ENCODE measurements at regions of chr6 and their contacts with region 1.

Region 1: GRCh38 chr6:36809941-36810803 is 29.1 kb downstream of the CPNE5 start:
- DNase-seq: peak; percentile 11
- H3K4me3 ChIP-seq: no peak overlapping the region
- H3K27ac ChIP-seq: no peak overlapping the region
- H3K4me1 ChIP-seq: peaks cover 10% of the 10 kb centered on the region
- H3K27me3 ChIP-seq: no peaks in the 10 kb centered on the region
- CTCF ChIP-seq: peak in 1 of 2 donors; percentile 40

Region 2: DNA sequence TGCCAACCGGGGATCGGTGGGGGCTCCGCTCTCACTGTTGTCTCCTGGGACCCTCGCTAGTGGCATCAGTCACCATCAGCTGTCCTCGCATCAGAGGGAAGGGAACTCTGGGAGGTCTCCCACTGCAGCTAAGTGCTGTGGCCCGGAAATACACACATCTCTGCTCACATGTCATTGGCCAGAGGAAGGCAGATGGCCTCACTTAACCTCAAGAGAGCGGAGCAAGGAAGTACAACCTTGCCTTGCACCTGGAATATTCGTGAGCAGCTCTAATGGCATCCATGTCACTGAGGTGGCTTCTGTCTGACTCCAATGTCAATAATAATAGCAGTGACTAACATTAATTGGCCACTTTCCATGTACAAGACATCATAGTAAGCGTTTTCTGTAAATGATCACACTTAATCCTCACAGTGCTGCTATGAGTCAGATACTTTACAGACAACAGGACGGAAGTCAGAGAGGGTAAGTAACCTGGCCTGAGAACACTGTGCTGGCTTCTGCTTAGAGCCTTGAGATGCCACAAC is 999.1 kb before region 1 on chr6:
- CTCF ChIA-PET with region 1: no interaction called
- dilution Hi-C with region 1: no loop called
- in situ Hi-C with region 1: no loop called
- intact Hi-C with region 1: no loop called
- DNase-seq: peak; percentile 87
- H3K4me3 ChIP-seq: no peak overlapping the region
- H3K27ac ChIP-seq: no peak overlapping the region
- H3K4me1 ChIP-seq: peaks cover 11% of the 10 kb centered on the region
- H3K27me3 ChIP-seq: no peaks in the 10 kb centered on the region
- CTCF ChIP-seq: no peak

Region 3: DNA sequence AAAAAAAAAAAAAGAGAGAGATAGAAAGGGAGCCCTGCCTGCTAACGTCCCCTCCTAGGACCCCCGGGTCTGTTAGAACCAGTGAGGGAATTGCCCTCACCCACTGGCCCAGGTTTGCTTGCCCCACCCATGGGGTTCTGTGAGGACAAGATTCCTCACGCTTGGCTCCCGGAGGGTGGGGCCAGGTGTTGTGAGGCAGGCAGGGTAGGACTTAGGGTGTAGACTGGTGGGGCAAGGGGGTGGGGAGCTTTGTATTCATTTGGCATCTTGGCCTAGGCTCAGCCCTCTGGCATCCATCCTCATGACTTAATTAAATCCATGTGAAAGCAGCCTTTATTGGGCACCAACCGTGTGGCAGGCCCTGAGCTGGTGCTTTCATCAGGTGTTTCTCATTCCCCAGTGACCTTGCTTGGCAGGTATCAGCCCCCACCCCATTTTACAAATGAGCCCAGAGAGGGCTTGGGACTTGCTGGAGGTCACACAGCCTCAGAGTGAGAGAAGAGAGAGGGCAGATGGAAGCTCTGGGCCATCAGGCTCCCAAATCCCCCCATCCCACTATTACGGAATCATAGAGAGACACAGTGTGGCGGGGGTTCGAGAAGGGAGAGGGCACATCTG is 93.6 kb before region 1 on chr6:
- CTCF ChIA-PET with region 1: no interaction called
- dilution Hi-C with region 1: loop called (anchors 5 kb)
- in situ Hi-C with region 1: no loop called
- intact Hi-C with region 1: no loop called
- DNase-seq: no peak
- H3K4me3 ChIP-seq: no peak overlapping the region
- H3K27ac ChIP-seq: no peak overlapping the region
- H3K4me1 ChIP-seq: no peaks in the 10 kb centered on the region
- H3K27me3 ChIP-seq: no peaks in the 10 kb centered on the region
- CTCF ChIP-seq: no peak

Region 4: DNA sequence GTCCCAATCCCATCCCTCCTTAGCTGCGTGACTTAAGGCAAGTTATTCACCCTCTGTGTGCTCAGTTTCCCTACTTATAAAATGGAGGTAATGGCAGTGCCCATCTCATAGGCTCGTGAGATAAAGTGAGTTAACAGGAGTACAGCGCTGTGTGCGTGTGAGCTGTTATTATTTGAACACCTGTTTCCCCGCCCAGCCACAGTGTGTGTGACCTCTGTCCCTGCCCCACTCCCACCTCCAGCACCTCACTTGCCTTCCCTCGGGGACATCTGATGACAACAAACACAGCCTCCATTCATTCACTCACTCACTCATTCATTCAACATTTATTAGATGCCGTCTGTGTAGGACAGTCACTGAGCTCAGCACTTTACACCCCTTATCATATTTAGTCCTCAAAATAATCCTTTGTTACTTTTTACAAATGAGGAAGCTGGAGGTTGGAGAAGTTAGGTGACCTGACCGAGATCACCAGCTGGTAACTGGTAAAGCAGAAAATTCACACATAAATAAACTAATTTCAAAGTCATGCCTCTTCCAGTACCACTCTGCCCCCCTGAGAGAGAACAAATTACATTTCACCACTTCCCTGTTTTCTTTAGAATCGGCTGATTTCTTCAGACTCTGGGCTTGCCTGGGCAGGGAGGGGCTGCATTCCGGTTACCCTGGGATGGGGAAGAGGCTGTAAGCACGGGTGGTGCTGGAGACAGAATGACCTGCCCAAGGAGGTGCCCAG is 29.6 kb before region 1 on chr6:
- CTCF ChIA-PET with region 1: no interaction called
- dilution Hi-C with region 1: loop called (anchors 5 kb)
- in situ Hi-C with region 1: no loop called
- intact Hi-C with region 1: no loop called
- DNase-seq: peak; percentile 11
- H3K4me3 ChIP-seq: no peak overlapping the region
- H3K27ac ChIP-seq: no peak overlapping the region
- H3K4me1 ChIP-seq: peaks cover 10% of the 10 kb centered on the region
- H3K27me3 ChIP-seq: no peaks in the 10 kb centered on the region
- CTCF ChIP-seq: no peak

Region 5: DNA sequence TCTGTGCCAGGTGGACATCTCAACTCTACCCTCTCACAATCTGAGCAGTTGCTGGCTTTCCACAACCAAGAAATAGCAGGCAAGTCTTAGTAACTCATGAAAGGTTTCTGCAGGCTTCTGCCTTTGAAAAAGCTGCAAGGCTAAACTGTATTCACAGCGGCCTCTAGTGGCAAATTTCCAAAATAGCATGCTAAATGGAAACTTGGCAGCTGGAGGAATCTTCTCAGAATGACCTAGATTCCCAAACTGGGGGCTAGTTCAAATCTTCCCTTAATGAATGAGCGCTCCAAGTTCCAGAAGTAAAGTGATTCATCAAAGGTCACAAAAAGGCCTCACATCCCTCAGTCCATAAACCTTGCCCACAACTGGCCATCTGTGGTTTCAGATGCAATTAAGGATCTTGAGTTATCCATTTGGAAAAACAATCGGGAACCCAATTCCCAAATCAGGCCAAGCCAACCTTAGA is 41.0 kb after region 1 on chr6:
- CTCF ChIA-PET with region 1: interaction called, 4 read pairs
- dilution Hi-C with region 1: no loop called
- in situ Hi-C with region 1: no loop called
- intact Hi-C with region 1: loop called (anchors 1 kb)
- DNase-seq: peak; percentile 58
- H3K4me3 ChIP-seq: no peak overlapping the region
- H3K27ac ChIP-seq: no peak overlapping the region
- H3K4me1 ChIP-seq: peaks cover 28% of the 10 kb centered on the region
- H3K27me3 ChIP-seq: no peaks in the 10 kb centered on the region
- CTCF ChIP-seq: peak; percentile 83 to 85

Region 6: GRCh38 chr6:36862164-36862847 is 52.1 kb after region 1 on chr6:
- CTCF ChIA-PET with region 1: no interaction called
- dilution Hi-C with region 1: loop called (anchors 5 kb)
- in situ Hi-C with region 1: no loop called
- intact Hi-C with region 1: no loop called
- DNase-seq: peak; percentile 90
- H3K4me3 ChIP-seq: no peak overlapping the region
- H3K27ac ChIP-seq: peak overlapping the region; percentile 51
- H3K4me1 ChIP-seq: peaks cover 15% of the 10 kb centered on the region
- H3K27me3 ChIP-seq: no peaks in the 10 kb centered on the region
- CTCF ChIP-seq: no peak

Measured in mammary epithelial cell (primary cell).